ENCODE measurements at regions of chr1 and their contacts with region 1.

Region 1: DNA sequence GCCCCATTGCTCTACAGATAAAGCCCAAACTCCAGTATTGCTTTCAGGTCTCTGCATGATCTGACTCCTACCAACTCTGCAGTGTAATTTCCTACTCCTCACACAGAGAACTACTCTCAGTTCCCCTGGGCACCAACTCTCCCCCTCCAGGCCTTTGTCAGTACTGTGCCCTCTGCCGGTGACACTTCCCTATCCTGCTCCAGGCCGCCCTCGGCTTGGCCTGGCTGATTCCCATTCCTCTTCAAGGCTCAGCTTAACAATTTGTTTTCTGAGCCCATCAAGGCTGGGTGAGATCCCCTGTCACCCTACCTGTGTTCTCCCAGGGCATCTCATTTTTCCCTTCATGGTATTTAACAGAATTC is 2.6 kb downstream of the SLAMF8 start:
- DNase-seq: peak; percentile 67
- ATAC-seq: peak; percentile 96
- H3K4me3 Mint-ChIP-seq: no peak overlapping the region
- H3K27ac Mint-ChIP-seq: no peak overlapping the region; the same call in 1 of the 2 replicates
- H3K4me1 Mint-ChIP-seq: peaks cover 5% of the 10 kb centered on the region
- H3K27me3 Mint-ChIP-seq: peaks cover 22% of the 10 kb centered on the region
- CTCF ChIP-seq: peak; percentile 18; the same call in 1 of the 2 replicates

Region 2: DNA sequence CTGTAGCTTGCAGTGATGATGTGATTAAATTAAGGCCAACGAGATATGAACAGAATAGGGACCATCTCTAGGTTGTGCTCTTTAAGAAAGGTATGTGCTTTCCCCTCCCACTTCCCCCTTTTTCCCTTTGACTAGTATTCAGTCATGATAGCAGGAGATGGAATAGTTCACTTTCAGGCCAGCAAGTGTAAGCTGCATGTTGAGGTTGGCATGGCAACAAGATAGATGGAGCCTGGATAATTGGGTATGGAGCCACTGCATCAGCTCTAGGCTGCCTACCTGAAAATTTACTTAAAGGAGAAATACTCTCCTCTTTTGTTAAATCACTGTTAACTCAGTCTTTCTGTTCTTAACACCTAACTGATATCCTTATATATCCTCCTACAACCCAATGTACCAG is 113.4 kb before region 1 on chr1:
- CTCF ChIA-PET with region 1: no interaction called
- POLR2A ChIA-PET with region 1: no interaction called
- DNase-seq: no peak
- ATAC-seq: no peak
- H3K4me3 Mint-ChIP-seq: no peak overlapping the region
- H3K27ac Mint-ChIP-seq: no peak overlapping the region
- H3K4me1 Mint-ChIP-seq: no peaks in the 10 kb centered on the region
- H3K27me3 Mint-ChIP-seq: peaks cover 5% of the 10 kb centered on the region; the same call in 1 of the 2 replicates
- CTCF ChIP-seq: no peak

Region 3: DNA sequence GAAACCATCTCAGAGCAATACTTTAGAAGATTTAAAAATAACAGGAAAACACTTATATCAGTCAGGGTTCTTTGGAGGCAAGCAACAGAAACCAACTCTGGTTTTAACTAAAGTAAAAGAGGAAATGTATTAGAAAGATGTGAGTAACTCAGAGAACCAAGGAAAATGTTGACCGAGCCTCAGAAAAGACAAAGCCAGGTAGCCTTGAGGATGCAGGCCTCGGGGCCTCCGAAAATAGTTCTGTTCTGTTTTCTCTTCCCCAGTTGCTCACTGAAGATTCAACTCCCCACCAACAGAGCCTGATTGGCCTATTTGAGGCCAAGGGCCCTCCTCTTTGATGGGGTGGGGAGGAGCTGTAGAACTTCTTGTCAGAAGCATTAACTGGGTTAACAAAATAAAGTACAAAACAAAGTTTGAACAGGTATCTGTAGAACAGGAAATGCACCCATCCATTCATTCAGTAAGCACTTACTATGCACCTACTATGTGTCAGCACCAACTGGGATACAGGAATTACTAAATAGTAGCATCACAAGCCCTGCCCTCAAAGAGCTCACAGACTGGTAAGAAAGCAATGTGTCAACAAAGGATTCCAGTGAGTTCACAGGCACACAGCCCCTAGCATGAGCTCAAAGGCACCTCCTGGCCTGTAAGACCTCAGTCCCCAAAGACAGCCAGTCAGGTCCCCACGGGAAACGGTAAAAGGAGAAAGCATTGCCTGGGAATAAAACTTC is 10.0 kb after region 1 on chr1:
- CTCF ChIA-PET with region 1: interaction called, 12 read pairs
- POLR2A ChIA-PET with region 1: interaction called, 6 read pairs
- DNase-seq: no peak
- ATAC-seq: no peak
- H3K4me3 Mint-ChIP-seq: no peak overlapping the region
- H3K27ac Mint-ChIP-seq: no peak overlapping the region
- H3K4me1 Mint-ChIP-seq: peaks cover 9% of the 10 kb centered on the region
- H3K27me3 Mint-ChIP-seq: no peaks in the 10 kb centered on the region; the same call in 1 of the 2 replicates
- CTCF ChIP-seq: no peak

Region 4: GRCh38 chr1:159916184-159917051 is 87.2 kb after region 1 on chr1:
- CTCF ChIA-PET with region 1: no interaction called
- POLR2A ChIA-PET with region 1: no interaction called
- DNase-seq: no peak
- ATAC-seq: peak; percentile 64
- H3K4me3 Mint-ChIP-seq: no peak overlapping the region
- H3K27ac Mint-ChIP-seq: peak overlapping the region; percentile 92
- H3K4me1 Mint-ChIP-seq: peaks cover 45% of the 10 kb centered on the region
- H3K27me3 Mint-ChIP-seq: no peaks in the 10 kb centered on the region
- CTCF ChIP-seq: no peak